Right ventricle myocardium superior (tissue), 1 donor: ENCODE measurements at regions of chr1 and their contacts with region 1.

Region 1: DNA sequence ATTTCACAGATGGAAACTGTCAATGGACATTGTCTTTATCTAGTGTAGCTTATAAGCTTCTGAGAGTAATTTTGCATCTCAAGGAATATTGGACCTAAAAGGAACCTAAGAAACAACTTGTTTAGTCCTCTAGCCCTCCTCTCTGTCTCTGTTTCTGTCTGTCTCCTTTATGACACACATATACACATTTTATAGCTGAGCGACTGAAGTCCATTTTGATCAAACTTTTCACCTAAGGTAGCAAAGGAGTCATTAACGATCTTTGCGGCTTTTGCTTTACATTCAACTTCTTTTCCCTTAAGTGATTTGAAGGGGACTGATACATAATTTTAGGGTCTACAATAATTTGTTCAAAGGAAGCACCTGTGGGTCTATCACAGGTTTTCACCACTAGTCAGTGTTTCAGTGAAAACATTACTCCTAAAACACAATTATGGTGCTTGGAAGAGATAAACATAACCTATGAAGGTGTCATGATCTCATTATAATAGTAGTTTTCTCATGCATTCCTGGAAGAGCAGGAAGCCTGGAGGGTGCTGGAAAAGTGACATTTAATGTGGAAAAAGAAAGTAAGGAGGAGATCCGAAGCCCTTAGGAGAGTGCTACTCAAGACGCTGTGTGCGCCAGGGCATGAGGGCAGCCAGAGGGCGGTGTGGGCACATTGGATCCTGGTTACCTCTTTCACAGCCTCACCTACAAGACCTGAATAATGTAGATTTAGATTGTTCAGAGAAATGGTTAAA is 248.6 kb downstream of the DNM3 start:
- DNase-seq: peak; percentile 67
- ATAC-seq: peak; percentile 85

Region 2: DNA sequence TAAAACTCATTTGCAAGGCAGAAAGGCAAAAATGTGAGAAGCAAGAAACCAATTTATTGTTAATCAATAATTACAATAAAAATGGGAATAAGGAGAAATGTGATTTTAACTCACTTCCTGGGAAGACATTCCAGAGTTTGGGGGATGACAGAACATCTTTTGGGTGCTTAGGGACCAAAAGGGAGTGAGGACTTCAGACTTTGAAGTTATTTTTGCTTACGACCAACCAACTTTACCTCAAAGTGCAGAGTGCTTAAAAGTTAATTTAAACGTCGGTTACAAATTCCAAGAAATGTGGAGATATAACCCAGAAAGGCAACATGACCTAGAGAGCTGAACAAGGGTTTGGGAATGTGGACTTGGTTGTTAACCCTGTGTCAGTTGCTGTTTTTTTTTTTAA is 96.1 kb after region 1 on chr1:
- intact Hi-C with region 1: no loop called
- DNase-seq: no peak
- ATAC-seq: no peak

Region 3: DNA sequence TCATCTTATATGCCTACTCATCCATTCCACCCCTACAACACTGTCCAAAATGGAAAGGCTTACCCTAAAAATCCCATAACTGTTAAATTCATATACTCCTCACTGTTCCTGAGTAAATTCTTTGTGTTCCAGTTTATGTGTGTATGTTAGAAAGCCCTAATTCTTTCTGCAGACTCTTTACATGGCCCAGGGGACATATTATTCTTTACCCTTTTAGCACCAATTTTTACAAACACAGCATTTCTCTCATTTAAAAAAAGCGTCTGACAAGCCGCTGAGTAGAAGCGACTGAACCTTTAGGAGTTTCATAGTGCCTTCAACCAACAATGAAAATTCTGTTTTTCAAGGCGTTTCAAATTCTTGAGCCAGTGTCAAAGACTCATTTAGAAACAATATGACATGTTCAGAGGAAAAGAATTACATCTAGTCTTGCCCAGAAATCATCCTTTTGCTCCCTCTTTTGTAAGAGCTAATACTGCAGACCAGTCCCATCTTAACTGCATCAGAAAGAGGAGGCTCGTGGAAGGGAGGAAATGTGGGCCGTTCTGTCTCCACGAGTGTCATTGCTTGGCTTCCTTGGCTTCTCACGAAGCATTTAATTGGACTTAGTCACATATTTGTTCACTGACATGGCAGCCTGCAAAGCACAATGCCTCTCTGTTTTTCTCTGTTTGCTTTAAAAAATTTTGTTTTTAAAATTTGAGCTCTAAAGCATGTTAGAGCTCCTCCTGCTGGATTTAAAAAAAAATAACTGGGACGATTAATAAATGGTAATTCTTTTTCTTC is 309.2 kb after region 1 on chr1:
- intact Hi-C with region 1: loop called (anchors 5 kb)
- DNase-seq: no peak
- ATAC-seq: peak; percentile 83

Region 4: DNA sequence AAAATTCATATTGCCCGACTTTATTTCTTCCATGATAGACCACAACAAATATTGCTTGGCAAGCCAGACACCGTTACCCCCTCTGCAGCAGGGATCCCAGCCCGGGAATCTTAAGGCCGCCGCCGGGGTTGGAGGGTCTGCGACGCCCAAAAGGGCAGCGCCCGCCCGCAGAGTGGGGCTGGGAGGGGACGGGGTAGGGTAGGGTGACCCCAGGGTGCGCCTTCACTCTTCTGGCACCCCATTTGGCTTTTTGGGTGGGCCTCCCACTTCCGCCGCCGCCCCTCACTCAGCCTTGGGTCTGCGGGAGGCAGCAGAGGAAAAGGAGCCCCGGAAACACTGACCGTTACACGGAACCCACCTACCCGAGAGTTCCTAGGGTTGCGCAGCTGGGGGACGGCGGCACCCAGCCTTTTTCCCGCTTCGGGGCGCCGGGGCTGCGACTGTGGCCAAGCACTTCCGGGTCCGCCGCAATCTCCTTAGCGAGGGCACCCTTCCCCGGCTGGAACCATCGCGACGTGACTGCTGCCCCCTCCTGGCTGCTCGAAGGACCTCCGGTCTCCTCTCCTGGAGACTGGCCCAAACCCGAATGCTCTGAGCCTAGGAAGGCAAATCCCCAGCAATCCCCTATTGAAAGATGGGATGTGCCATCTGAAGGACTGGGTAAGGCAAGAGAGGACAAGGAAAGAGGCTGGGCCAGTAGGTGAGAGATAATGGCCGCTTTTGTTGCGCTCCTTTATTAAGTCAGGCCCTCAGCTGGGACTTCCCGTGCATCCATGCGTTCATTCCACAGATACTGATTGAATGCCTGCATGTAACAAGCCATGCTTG is 353.9 kb after region 1 on chr1 and contains the start of gene PIGC:
- intact Hi-C with region 1: loop called (anchors 10 kb)
- DNase-seq: peak; percentile 94
- ATAC-seq: peak; percentile 100
- total RNA-seq, gene PIGC: 12.7 TPM